Esophagus muscularis mucosa (tissue), 4 donors: ENCODE measurements at regions of chr9 and their contacts with region 1.

Region 1: GRCh38 chr9:31119882-31120454 is 1264.5 kb upstream of the ACO1 start:
- DNase-seq: no peak
- H3K4me3 ChIP-seq: no peak overlapping the region
- H3K27ac ChIP-seq: no peak overlapping the region
- H3K4me1 ChIP-seq: no peaks in the 10 kb centered on the region
- H3K27me3 ChIP-seq: no peaks in the 10 kb centered on the region
- CTCF ChIP-seq: peak; percentile 33 to 47 (median 47)
- EP300 ChIP-seq: no peak
- POLR2A ChIP-seq: no peak

Region 2: GRCh38 chr9:32251539-32251938 is 1131.6 kb after region 1 on chr9:
- intact Hi-C with region 1: loop called (anchors 10 kb)
- DNase-seq: no peak
- H3K4me3 ChIP-seq: no peak overlapping the region
- H3K27ac ChIP-seq: no peak overlapping the region
- H3K4me1 ChIP-seq: peaks cover 0 to 8% (median 5%) of the 10 kb centered on the region in 4 donors
- H3K27me3 ChIP-seq: no peaks in the 10 kb centered on the region
- CTCF ChIP-seq: peak; percentile 47 to 69 (median 67)
- EP300 ChIP-seq: no peak
- POLR2A ChIP-seq: no peak